ENCODE measurements at regions of chr10 and their contacts with region 1.

Region 1: DNA sequence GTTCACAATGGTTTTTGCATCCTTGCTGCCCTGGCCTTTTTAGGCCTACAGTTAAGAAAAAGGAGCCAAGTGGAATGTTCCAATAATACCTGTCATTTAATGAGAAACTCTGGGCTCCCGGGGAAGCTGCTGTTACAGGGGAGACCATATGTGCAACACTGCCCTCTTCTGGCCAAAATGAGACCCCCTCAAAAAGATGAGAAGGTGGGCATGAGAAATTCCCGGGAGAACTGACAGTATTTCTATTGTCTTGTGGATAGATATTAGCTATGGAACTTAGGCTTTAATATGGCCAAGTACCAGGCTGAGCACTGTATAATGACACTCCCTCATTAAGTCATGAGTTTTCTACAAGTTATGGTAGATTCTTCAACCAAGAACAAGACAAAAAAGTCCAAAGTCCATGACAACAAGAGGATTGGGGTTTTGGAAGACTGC is 99.4 kb downstream of the CCDC3 start:
- DNase-seq: peak; percentile 66
- H3K4me3 ChIP-seq: no peak overlapping the region
- H3K27ac ChIP-seq: no peak overlapping the region
- H3K4me1 ChIP-seq: peaks cover 5% of the 10 kb centered on the region
- H3K27me3 ChIP-seq: peaks cover 0 to 2% of the 10 kb centered on the region in 2 experiments
- CTCF ChIP-seq: peak; percentile 72 to 75
- POLR2A ChIP-seq: no peak

Region 2: DNA sequence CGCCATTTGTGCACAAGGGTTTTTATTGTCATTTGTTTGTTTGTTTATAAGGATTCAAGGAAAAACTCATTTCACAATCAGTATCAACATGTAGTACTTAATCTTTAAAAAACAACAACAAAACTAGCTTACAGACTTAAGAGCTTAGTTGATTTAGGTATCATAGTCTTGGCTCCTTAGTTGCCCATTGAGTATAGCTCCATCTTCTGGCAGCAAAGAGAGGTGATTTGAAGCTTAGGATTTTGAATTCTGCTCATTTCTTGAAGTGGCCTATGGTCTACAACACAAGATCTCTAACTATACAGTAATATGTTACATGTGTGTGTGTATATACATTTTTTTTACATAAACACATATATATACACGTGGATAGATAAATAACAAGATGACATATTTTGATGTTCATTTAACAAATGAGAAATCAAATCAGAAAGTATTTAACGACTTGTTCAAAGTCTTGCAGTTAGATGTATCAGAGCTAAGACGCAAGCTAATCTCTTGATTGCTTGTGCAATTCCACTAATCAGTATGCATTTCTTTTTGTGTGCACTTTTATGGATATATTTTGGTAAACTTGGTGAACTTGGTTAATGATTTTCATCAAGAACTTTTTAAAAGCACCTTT is 245.5 kb before region 1 on chr10:
- CTCF ChIA-PET with region 1: interaction called, 17 read pairs
- POLR2A ChIA-PET with region 1: no interaction called
- dilution Hi-C with region 1: no loop called
- intact Hi-C with region 1: no loop called
- DNase-seq: peak; percentile 58
- H3K4me3 ChIP-seq: no peak overlapping the region
- H3K27ac ChIP-seq: no peak overlapping the region
- H3K4me1 ChIP-seq: no peaks in the 10 kb centered on the region
- H3K27me3 ChIP-seq: peaks cover 0 to 3% of the 10 kb centered on the region in 2 experiments
- CTCF ChIP-seq: peak; percentile 56
- POLR2A ChIP-seq: no peak

Region 3: GRCh38 chr10:12710594-12711349 is 191.4 kb before region 1 on chr10:
- CTCF ChIA-PET with region 1: interaction called, 120 read pairs
- POLR2A ChIA-PET with region 1: no interaction called
- dilution Hi-C with region 1: no loop called
- intact Hi-C with region 1: loop called (anchors 1 kb)
- DNase-seq: peak; percentile 83
- H3K4me3 ChIP-seq: no peak overlapping the region
- H3K27ac ChIP-seq: no peak overlapping the region
- H3K4me1 ChIP-seq: peaks cover 53% of the 10 kb centered on the region
- H3K27me3 ChIP-seq: no peaks in the 10 kb centered on the region
- CTCF ChIP-seq: peak; percentile 91 to 95
- POLR2A ChIP-seq: no peak

Region 4: DNA sequence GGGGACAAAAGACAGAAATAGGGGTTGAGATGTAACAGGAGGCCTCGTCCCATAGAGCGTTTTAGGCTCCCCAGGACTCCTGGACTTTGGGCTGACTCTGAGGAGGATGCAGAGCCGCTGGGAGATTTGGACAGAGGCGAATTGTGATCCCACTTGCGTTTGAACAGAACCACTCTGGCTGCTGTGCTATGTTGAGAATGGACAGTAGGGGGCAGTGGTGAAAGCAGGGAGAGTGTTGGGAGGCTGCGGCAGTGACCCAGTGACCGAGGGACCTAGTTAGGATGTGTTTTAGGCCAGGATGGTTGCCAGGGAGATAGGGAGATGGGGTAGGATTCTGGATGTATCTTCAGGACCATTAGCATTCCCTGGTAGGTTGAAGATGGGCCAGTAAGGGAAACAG is 172.3 kb before region 1 on chr10:
- CTCF ChIA-PET with region 1: interaction called, 17 read pairs
- POLR2A ChIA-PET with region 1: no interaction called
- dilution Hi-C with region 1: no loop called
- intact Hi-C with region 1: no loop called
- DNase-seq: no peak
- H3K4me3 ChIP-seq: no peak overlapping the region
- H3K27ac ChIP-seq: no peak overlapping the region
- H3K4me1 ChIP-seq: no peaks in the 10 kb centered on the region
- H3K27me3 ChIP-seq: no peaks in the 10 kb centered on the region
- CTCF ChIP-seq: peak; percentile 49 to 56
- POLR2A ChIP-seq: no peak

Region 5: DNA sequence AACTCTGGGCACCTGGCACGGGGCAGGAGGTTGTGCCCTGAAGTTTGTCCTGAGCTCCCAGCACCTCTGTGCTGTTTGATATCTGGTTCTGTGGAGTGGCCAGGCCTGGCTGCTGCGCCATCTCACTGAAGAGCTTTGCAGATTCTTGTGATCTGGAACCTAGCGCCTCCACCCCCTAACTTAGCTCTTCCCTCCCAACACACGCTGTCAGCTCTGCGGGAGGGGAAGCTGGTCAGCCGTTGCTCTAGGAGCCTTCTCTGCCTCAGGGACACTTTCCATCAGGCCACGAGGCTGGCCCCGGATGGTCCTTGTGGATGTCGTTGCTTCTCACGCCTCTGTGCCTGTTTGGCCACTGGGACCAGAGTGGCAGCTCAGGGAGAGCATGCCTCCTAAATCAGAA is 113.9 kb before region 1 on chr10:
- CTCF ChIA-PET with region 1: interaction called, 237 read pairs
- POLR2A ChIA-PET with region 1: no interaction called
- dilution Hi-C with region 1: no loop called
- intact Hi-C with region 1: no loop called
- DNase-seq: no peak
- H3K4me3 ChIP-seq: no peak overlapping the region
- H3K27ac ChIP-seq: no peak overlapping the region
- H3K4me1 ChIP-seq: no peaks in the 10 kb centered on the region
- H3K27me3 ChIP-seq: no peaks in the 10 kb centered on the region
- CTCF ChIP-seq: no peak
- POLR2A ChIP-seq: no peak

Region 6: GRCh38 chr10:12884380-12884779 is 17.8 kb before region 1 on chr10:
- CTCF ChIA-PET with region 1: interaction called, 11 read pairs
- POLR2A ChIA-PET with region 1: no interaction called
- dilution Hi-C with region 1: no loop called
- intact Hi-C with region 1: no loop called
- DNase-seq: no peak
- H3K4me3 ChIP-seq: no peak overlapping the region
- H3K27ac ChIP-seq: no peak overlapping the region
- H3K4me1 ChIP-seq: no peaks in the 10 kb centered on the region
- H3K27me3 ChIP-seq: no peaks in the 10 kb centered on the region
- CTCF ChIP-seq: no peak
- POLR2A ChIP-seq: no peak

Region 7: GRCh38 chr10:12971001-12971788 is 69.0 kb after region 1 on chr10:
- CTCF ChIA-PET with region 1: no interaction called
- POLR2A ChIA-PET with region 1: no interaction called
- dilution Hi-C with region 1: no loop called
- intact Hi-C with region 1: no loop called
- DNase-seq: no peak
- H3K4me3 ChIP-seq: no peak overlapping the region
- H3K27ac ChIP-seq: no peak overlapping the region
- H3K4me1 ChIP-seq: no peaks in the 10 kb centered on the region
- H3K27me3 ChIP-seq: no peaks in the 10 kb centered on the region
- CTCF ChIP-seq: no peak
- POLR2A ChIP-seq: no peak

Region 8: GRCh38 chr10:13038391-13038790 is 136.2 kb after region 1 on chr10:
- CTCF ChIA-PET with region 1: no interaction called
- POLR2A ChIA-PET with region 1: no interaction called
- dilution Hi-C with region 1: no loop called
- intact Hi-C with region 1: no loop called
- DNase-seq: no peak
- H3K4me3 ChIP-seq: no peak overlapping the region
- H3K27ac ChIP-seq: no peak overlapping the region
- H3K4me1 ChIP-seq: no peaks in the 10 kb centered on the region
- H3K27me3 ChIP-seq: peaks cover 2 to 3% of the 10 kb centered on the region in 2 experiments
- CTCF ChIP-seq: no peak
- POLR2A ChIP-seq: no peak

Region 9: GRCh38 chr10:13074561-13075451 is 172.7 kb after region 1 on chr10:
- CTCF ChIA-PET with region 1: interaction called, 8 read pairs
- POLR2A ChIA-PET with region 1: no interaction called
- dilution Hi-C with region 1: no loop called
- intact Hi-C with region 1: loop called (anchors 2 kb)
- DNase-seq: peak; percentile 61
- H3K4me3 ChIP-seq: no peak overlapping the region
- H3K27ac ChIP-seq: no peak overlapping the region
- H3K4me1 ChIP-seq: no peaks in the 10 kb centered on the region
- H3K27me3 ChIP-seq: peaks cover 5 to 7% of the 10 kb centered on the region in 2 experiments
- CTCF ChIP-seq: peak; percentile 83
- POLR2A ChIP-seq: no peak

Measured in endothelial cell of umbilical vein (primary cell).